Cardiac septum (tissue), 1 donor: ENCODE measurements at regions of chr12 and their contacts with region 1.

Region 1: GRCh38 chr12:99767809-99768208 is 120.3 kb downstream of the GARIN6 start:
- DNase-seq: no peak

Region 2: GRCh38 chr12:99045158-99045557 is 722.7 kb before region 1 on chr12:
- intact Hi-C with region 1: loop called (anchors 2 kb)
- DNase-seq: no peak

Region 3: GRCh38 chr12:99722690-99723486 is 44.9 kb before region 1 on chr12:
- intact Hi-C with region 1: no loop called
- DNase-seq: no peak